CD8-positive, alpha-beta T cell (primary cell): ENCODE measurements at regions of chr6 and their contacts with region 1.

Region 1: GRCh38 chr6:42017021-42017643 is 33.2 kb upstream of the TAF8 start:
- DNase-seq: peak in 1 of 9 experiments; percentile 31
- ATAC-seq: peak; percentile 16
- H3K4me3 ChIP-seq: no peak overlapping the region
- H3K4me3 Mint-ChIP-seq: peak overlapping the region; percentile 19
- H3K27ac ChIP-seq: peak overlapping the region in 1 of 2 experiments; percentile 40
- H3K27ac Mint-ChIP-seq: peak overlapping the region; percentile 78
- H3K4me1 ChIP-seq: peaks cover 57% of the 10 kb centered on the region
- H3K4me1 Mint-ChIP-seq: peaks cover 68% of the 10 kb centered on the region
- H3K27me3 ChIP-seq: no peaks in the 10 kb centered on the region
- H3K27me3 Mint-ChIP-seq: no peaks in the 10 kb centered on the region
- CTCF ChIP-seq: no peak

Region 2: GRCh38 chr6:41984623-41985022 is 32.5 kb before region 1 on chr6:
- CTCF ChIA-PET with region 1: interaction called, 7 read pairs
- POLR2A ChIA-PET with region 1: no interaction called
- intact Hi-C with region 1: loop called in 1 of 2 experiments (anchors 5 kb)
- DNase-seq: no peak
- ATAC-seq: no peak
- H3K4me3 ChIP-seq: no peak overlapping the region
- H3K4me3 Mint-ChIP-seq: no peak overlapping the region
- H3K27ac ChIP-seq: no peak overlapping the region
- H3K27ac Mint-ChIP-seq: peak overlapping the region; percentile 25
- H3K4me1 ChIP-seq: peaks cover 48% of the 10 kb centered on the region
- H3K4me1 Mint-ChIP-seq: peaks cover 71% of the 10 kb centered on the region
- H3K27me3 ChIP-seq: no peaks in the 10 kb centered on the region
- H3K27me3 Mint-ChIP-seq: no peaks in the 10 kb centered on the region
- CTCF ChIP-seq: no peak

Region 3: GRCh38 chr6:42028234-42029061 is 11.3 kb after region 1 on chr6:
- CTCF ChIA-PET with region 1: no interaction called
- POLR2A ChIA-PET with region 1: interaction called, 4 read pairs
- intact Hi-C with region 1: loop called in 1 of 2 experiments (anchors 1 kb)
- DNase-seq: peak in 1 of 9 experiments; percentile 41
- ATAC-seq: peak; percentile 7
- H3K4me3 ChIP-seq: peak overlapping the region in 1 of 2 experiments; percentile 10
- H3K4me3 Mint-ChIP-seq: peak overlapping the region; percentile 71
- H3K27ac ChIP-seq: peak overlapping the region in 1 of 2 experiments; percentile 66
- H3K27ac Mint-ChIP-seq: peak overlapping the region; percentile 99
- H3K4me1 ChIP-seq: peaks cover 96% of the 10 kb centered on the region
- H3K4me1 Mint-ChIP-seq: peaks cover 90% of the 10 kb centered on the region
- H3K27me3 ChIP-seq: no peaks in the 10 kb centered on the region
- H3K27me3 Mint-ChIP-seq: no peaks in the 10 kb centered on the region
- CTCF ChIP-seq: no peak

Region 4: GRCh38 chr6:42038811-42039408 is 21.8 kb after region 1 on chr6:
- CTCF ChIA-PET with region 1: interaction called, 12 read pairs
- POLR2A ChIA-PET with region 1: interaction called, 9 read pairs
- intact Hi-C with region 1: loop called (anchors 1 kb)
- DNase-seq: no peak
- ATAC-seq: no peak
- H3K4me3 ChIP-seq: peak overlapping the region; percentile 34 to 52
- H3K4me3 Mint-ChIP-seq: peak overlapping the region; percentile 79
- H3K27ac ChIP-seq: peak overlapping the region; percentile 32 to 57
- H3K27ac Mint-ChIP-seq: peak overlapping the region; percentile 95
- H3K4me1 ChIP-seq: peaks cover 80% of the 10 kb centered on the region
- H3K4me1 Mint-ChIP-seq: peaks cover 75% of the 10 kb centered on the region
- H3K27me3 ChIP-seq: no peaks in the 10 kb centered on the region
- H3K27me3 Mint-ChIP-seq: no peaks in the 10 kb centered on the region
- CTCF ChIP-seq: no peak